ENCODE measurements at regions of chr19 and their contacts with region 1.

Region 1: DNA sequence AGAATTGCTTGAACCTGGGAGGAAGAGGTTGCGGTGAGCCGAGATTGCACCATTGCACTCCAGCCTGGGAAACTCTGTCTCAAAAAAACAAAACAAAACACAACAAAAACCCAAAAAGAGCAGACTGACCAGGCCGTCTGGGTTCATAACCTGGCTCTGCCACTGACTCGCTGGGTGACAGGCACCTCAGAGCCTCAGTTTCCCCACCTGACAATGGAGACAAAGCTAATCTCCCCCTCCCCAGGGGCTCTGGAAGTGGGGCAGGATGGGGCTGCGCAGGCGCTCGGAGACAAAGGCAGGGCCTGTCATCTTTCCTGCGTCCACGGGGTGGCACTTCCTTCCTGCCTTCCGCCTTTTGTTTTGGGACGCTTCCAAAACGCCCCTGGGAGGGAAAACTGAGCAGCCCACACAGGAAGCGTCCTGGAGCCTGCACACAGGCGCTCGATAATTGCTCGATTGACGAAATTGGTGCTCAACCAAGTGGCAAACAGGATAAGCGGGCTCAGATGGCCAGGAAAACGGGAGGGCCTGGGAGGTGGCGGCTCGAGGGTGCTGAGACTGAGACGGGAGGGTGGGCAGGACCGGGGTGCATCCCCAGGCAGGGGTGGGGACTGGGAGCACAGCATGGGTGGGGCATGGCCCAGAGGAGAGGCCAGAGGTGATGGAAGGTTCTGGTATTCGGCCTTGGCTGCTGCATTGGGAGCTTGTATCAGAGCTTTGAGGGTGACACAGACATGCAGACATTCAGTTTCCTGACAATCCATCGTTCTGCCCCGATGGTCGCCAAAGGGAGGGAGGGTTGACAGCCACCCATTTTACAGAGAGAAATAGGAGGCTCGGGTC is 17.8 kb downstream of the SPC24 start:
- DNase-seq: peak; percentile 95
- H3K4me3 ChIP-seq: peak overlapping the region in 3 of 4 donors; percentile 19 to 30 (median 20)
- H3K27ac ChIP-seq: peak overlapping the region; percentile 92 to 99 (median 95)
- H3K4me1 ChIP-seq: peaks cover 0 to 59% (median 52%) of the 10 kb centered on the region in 4 donors
- H3K27me3 ChIP-seq: no peaks in the 10 kb centered on the region
- CTCF ChIP-seq: peak; percentile 85 to 97 (median 94)
- EP300 ChIP-seq: peak in 1 of 4 donors; percentile 29
- POLR2A ChIP-seq: no peak

Region 2: GRCh38 chr19:11115895-11116446 is 21.8 kb before region 1 on chr19:
- intact Hi-C with region 1: no loop called
- DNase-seq: no peak
- H3K4me3 ChIP-seq: no peak overlapping the region
- H3K27ac ChIP-seq: no peak overlapping the region
- H3K4me1 ChIP-seq: no peaks in the 10 kb centered on the region
- H3K27me3 ChIP-seq: no peaks in the 10 kb centered on the region
- CTCF ChIP-seq: no peak
- EP300 ChIP-seq: no peak
- POLR2A ChIP-seq: no peak

Region 3: GRCh38 chr19:11164879-11165406 is 27.2 kb after region 1 on chr19:
- intact Hi-C with region 1: loop called (anchors 2 kb)
- DNase-seq: peak; percentile 98
- H3K4me3 ChIP-seq: peak overlapping the region in 2 of 4 donors; percentile 11 to 17
- H3K27ac ChIP-seq: peak overlapping the region; percentile 87 to 95 (median 92)
- H3K4me1 ChIP-seq: peaks cover 0 to 83% (median 76%) of the 10 kb centered on the region in 4 donors
- H3K27me3 ChIP-seq: no peaks in the 10 kb centered on the region
- CTCF ChIP-seq: no peak
- EP300 ChIP-seq: peak in 2 of 4 donors; percentile 35 to 37
- POLR2A ChIP-seq: no peak

Region 4: GRCh38 chr19:11179716-11180297 is 42.0 kb after region 1 on chr19:
- intact Hi-C with region 1: no loop called
- DNase-seq: no peak
- H3K4me3 ChIP-seq: peak overlapping the region in 1 of 4 donors; percentile 10
- H3K27ac ChIP-seq: peak overlapping the region; percentile 91 to 98 (median 94)
- H3K4me1 ChIP-seq: peaks cover 4 to 63% (median 56%) of the 10 kb centered on the region in 4 donors
- H3K27me3 ChIP-seq: no peaks in the 10 kb centered on the region
- CTCF ChIP-seq: no peak
- EP300 ChIP-seq: no peak
- POLR2A ChIP-seq: no peak

Region 5: DNA sequence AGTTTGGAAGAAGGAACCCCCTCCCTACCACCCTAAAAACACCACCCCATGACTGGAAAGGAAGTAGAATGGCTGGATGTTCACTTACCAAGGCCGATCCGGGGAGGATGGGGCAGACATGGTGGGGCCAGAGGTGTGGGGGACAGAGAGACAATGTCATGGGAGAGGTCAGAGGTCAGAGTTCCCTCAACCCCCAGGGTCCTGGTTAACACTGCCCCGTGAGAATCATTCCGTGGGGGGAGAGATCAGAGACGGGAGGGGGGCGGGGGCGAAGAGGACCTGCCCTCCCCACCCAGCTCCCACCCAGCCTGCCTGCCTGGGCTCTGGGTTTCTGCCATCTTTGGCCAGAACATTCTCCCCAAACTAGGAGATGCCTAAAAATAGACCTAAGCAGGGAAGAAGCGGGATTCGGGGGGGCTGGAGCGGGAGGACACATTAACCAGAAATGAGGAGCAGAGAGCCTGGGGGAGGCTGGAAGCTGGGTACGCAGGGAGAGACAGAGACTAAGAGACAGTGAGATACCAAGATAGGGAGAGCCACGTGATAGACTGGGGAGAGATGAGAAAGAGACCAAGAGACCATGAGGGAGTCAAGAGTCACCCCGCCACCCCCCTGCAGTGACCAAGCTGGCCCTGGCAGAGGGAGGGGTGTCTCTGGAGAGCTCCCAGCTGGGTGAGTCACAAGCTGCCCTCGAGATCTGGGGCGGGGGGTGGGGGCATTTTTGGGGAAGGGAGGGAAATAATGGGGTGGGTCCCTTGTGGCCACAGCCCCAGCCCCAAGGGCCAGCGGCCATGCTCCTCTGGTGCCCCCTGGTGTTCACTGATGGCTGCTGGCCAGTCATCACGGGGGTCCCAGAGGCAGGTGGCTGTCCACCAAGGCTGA is 65.7 kb after region 1 on chr19:
- intact Hi-C with region 1: loop called (anchors 1 kb)
- DNase-seq: peak; percentile 97
- H3K4me3 ChIP-seq: peak overlapping the region in 3 of 4 donors; percentile 31 to 45 (median 43)
- H3K27ac ChIP-seq: peak overlapping the region; percentile 91 to 98 (median 94)
- H3K4me1 ChIP-seq: peaks cover 0 to 56% (median 44%) of the 10 kb centered on the region in 4 donors
- H3K27me3 ChIP-seq: no peaks in the 10 kb centered on the region
- CTCF ChIP-seq: peak; percentile 89 to 96 (median 96)
- EP300 ChIP-seq: peak in 3 of 4 donors; percentile 49 to 80 (median 69)
- POLR2A ChIP-seq: no peak

Region 6: DNA sequence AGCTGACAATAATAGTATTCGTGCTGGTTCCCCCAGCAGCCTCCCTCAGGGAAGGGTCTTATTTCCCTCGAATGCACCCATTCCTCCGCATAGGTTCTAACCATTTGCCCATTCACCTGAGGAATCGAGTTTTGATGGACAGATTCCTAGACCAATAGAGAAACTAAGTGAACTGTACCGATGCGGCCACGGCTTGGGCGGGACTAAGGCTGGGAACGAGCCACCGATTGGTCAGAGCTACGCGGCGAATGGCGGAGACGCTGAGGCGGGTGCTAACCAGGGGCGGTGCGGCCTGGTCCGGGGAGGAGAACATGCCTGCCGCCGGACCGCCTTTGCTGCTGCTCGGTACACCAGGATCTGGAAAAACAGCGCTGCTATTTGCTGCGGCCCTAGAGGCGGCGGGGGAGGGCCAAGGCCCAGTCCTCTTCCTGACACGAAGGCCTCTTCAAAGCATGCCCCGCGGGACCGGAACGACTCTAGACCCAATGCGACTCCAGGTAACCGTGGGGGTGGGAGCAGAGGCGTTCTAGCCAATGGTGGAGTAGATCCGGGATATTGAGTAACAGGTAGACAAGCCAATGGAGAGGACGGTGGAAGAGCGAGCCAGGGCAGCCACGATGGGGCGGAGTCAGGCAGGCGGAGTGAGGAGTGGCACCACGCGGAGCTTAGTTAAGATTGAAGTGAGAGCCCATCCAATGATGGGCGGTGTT is 236.8 kb after region 1 on chr19 and contains the start of gene SWSAP1:
- intact Hi-C with region 1: loop called (anchors 10 kb)
- DNase-seq: peak; percentile 100
- H3K4me3 ChIP-seq: peak within 1 kb of the TSS; percentile 53 to 66 (median 63)
- H3K27ac ChIP-seq: peak within 1 kb of the TSS; percentile 87 to 95 (median 93)
- H3K4me1 ChIP-seq: peaks cover 2 to 45% (median 42%) of the 10 kb centered on the region in 4 donors
- H3K27me3 ChIP-seq: no peaks in the 10 kb centered on the region
- CTCF ChIP-seq: no peak
- EP300 ChIP-seq: no peak
- POLR2A ChIP-seq: peak; percentile 23
- total RNA-seq, gene SWSAP1: 0.71 to 1.8 (median 0.96) TPM